ENCODE measurements at regions of chr6 and their contacts with region 1.

Region 1: DNA sequence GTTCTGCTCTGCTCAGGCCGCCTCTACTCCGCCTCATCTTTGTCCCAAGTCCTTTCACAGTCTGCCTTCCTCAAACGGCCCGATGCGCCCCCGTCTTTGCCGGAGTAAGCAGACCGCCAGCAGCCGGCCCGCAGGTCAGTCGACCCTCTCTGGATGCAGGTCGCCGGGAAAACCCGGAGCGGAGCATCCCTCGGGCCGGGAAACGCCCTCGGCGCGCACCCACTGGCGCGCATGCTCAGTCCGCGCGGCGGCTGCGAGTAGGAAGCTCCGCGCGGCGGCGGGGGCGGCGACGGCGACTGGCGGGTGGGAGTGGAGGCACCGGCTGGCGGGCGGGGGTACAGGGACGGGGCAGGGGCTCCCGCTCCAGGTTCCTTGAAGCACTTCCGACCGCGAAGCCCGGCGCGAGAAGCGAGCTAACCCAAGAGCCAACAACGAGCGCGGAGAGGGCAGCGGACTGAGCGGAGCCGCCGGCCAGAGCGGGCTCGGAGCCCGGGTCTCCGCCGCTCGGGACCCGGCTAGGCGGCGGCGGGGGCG is at the start of gene LRRC1:
- DNase-seq: peak; percentile 91
- H3K4me3 Mint-ChIP-seq: peak within 1 kb of the TSS; percentile 92
- H3K27ac Mint-ChIP-seq: peak within 1 kb of the TSS; percentile 87
- H3K4me1 Mint-ChIP-seq: peaks cover 29% of the 10 kb centered on the region
- H3K27me3 Mint-ChIP-seq: no peaks in the 10 kb centered on the region
- CTCF ChIP-seq: no peak
- total RNA-seq, gene LRRC1: 16.0 and 18.6 TPM in 2 replicates

Region 2: GRCh38 chr6:53492860-53493634 is 301.7 kb before region 1 on chr6:
- CTCF ChIA-PET with region 1: no interaction called
- POLR2A ChIA-PET with region 1: no interaction called
- intact Hi-C with region 1: loop called (anchors 10 kb)
- DNase-seq: peak; percentile 74
- H3K4me3 Mint-ChIP-seq: peak overlapping the region; percentile 49
- H3K27ac Mint-ChIP-seq: no peak overlapping the region
- H3K4me1 Mint-ChIP-seq: peaks cover 29% of the 10 kb centered on the region
- H3K27me3 Mint-ChIP-seq: no peaks in the 10 kb centered on the region
- CTCF ChIP-seq: peak; percentile 71

Region 3: GRCh38 chr6:53658992-53659391 is 135.8 kb before region 1 on chr6:
- CTCF ChIA-PET with region 1: no interaction called
- POLR2A ChIA-PET with region 1: no interaction called
- intact Hi-C with region 1: no loop called
- DNase-seq: no peak
- H3K4me3 Mint-ChIP-seq: no peak overlapping the region
- H3K27ac Mint-ChIP-seq: no peak overlapping the region
- H3K4me1 Mint-ChIP-seq: peaks cover 13% of the 10 kb centered on the region
- H3K27me3 Mint-ChIP-seq: no peaks in the 10 kb centered on the region
- CTCF ChIP-seq: no peak

Region 4: DNA sequence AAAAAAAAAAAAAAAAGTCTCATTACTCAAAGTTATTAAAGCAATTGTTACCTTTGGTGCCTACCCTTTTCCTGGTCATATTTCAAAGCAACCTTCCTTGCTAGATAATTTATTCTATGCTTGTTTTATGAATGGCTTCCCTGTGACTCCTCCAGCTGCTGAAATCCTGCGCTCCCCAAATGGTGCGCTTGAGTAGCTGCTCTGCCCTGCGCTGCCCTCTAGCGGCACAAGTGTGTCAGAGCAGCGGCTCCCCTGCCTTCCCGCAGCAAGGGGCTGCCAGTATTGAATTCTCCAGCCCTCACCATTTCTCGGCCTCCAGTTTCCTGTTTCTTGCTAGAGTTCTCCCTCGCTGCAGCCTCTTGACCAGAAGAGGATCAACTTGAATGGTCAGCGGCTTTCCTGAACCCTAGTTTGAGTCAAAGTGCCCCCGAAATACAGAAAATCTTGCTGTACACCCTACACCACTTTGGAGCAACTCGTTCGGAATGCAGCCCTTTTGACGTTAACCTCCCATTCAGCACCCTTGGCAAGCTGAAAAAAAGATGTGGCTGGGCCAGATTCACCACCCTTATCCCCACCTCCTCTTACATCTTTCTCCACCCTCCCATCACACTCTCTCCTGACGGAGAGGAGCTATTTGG is 68.9 kb before region 1 on chr6:
- CTCF ChIA-PET with region 1: interaction called, 31 read pairs
- POLR2A ChIA-PET with region 1: interaction called, 55 read pairs
- intact Hi-C with region 1: no loop called
- DNase-seq: peak; percentile 75
- H3K4me3 Mint-ChIP-seq: no peak overlapping the region
- H3K27ac Mint-ChIP-seq: no peak overlapping the region
- H3K4me1 Mint-ChIP-seq: peaks cover 15% of the 10 kb centered on the region
- H3K27me3 Mint-ChIP-seq: no peaks in the 10 kb centered on the region
- CTCF ChIP-seq: peak; percentile 93

Region 5: GRCh38 chr6:53752856-53753255 is 41.9 kb before region 1 on chr6:
- CTCF ChIA-PET with region 1: interaction called, 12 read pairs
- POLR2A ChIA-PET with region 1: interaction called, 266 read pairs
- intact Hi-C with region 1: no loop called
- DNase-seq: peak; percentile 61
- H3K4me3 Mint-ChIP-seq: peak overlapping the region; percentile 16
- H3K27ac Mint-ChIP-seq: peak overlapping the region; percentile 98
- H3K4me1 Mint-ChIP-seq: peaks cover 21% of the 10 kb centered on the region
- H3K27me3 Mint-ChIP-seq: no peaks in the 10 kb centered on the region
- CTCF ChIP-seq: no peak

Region 6: DNA sequence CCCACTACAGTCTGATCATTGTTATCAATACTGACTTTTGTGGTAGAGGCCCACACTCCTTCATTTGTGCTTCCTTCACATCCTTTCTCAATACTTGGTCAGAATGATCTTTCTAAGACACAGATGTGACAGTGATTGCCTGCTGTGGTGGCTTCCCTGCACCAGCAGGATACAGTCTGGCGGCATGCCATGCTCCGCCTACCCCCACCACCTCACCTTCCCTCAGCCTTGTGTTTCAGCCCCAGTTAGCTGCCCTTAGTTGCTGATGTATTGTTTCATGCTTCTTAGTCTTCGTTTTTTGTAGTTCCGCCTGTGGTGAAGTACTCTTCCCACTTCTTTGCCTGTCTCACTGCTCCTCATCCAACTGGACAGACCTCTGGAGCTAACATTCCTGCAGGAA is 10.9 kb after region 1 on chr6:
- CTCF ChIA-PET with region 1: interaction called, 15 read pairs
- POLR2A ChIA-PET with region 1: interaction called, 77 read pairs
- intact Hi-C with region 1: no loop called
- DNase-seq: no peak
- H3K4me3 Mint-ChIP-seq: no peak overlapping the region
- H3K27ac Mint-ChIP-seq: no peak overlapping the region
- H3K4me1 Mint-ChIP-seq: peaks cover 32% of the 10 kb centered on the region
- H3K27me3 Mint-ChIP-seq: no peaks in the 10 kb centered on the region
- CTCF ChIP-seq: no peak

Region 7: GRCh38 chr6:53837865-53838769 is 43.3 kb after region 1 on chr6:
- CTCF ChIA-PET with region 1: no interaction called
- POLR2A ChIA-PET with region 1: interaction called, 13 read pairs
- intact Hi-C with region 1: no loop called
- DNase-seq: no peak
- H3K4me3 Mint-ChIP-seq: no peak overlapping the region
- H3K27ac Mint-ChIP-seq: peak overlapping the region; percentile 20
- H3K4me1 Mint-ChIP-seq: peaks cover 22% of the 10 kb centered on the region
- H3K27me3 Mint-ChIP-seq: no peaks in the 10 kb centered on the region
- CTCF ChIP-seq: no peak

Region 8: GRCh38 chr6:53956068-53956711 is 161.4 kb after region 1 on chr6:
- CTCF ChIA-PET with region 1: interaction called, 19 read pairs
- POLR2A ChIA-PET with region 1: interaction called, 29 read pairs
- intact Hi-C with region 1: loop called (anchors 1 kb)
- DNase-seq: peak; percentile 70
- H3K4me3 Mint-ChIP-seq: no peak overlapping the region
- H3K27ac Mint-ChIP-seq: no peak overlapping the region
- H3K4me1 Mint-ChIP-seq: no peaks in the 10 kb centered on the region
- H3K27me3 Mint-ChIP-seq: no peaks in the 10 kb centered on the region
- CTCF ChIP-seq: peak; percentile 67

Measured in MCF 10A (cell line).